OCI-LY7 (cell line): ENCODE measurements at regions of chr1 and their contacts with region 1.

Region 1: GRCh38 chr1:161225534-161226319 is at the start of gene TOMM40L:
- DNase-seq: peak; percentile 99
- H3K4me3 ChIP-seq: peak within 1 kb of the TSS; percentile 73
- H3K27ac ChIP-seq: peak within 1 kb of the TSS; percentile 35
- H3K4me1 ChIP-seq: peaks cover 24% of the 10 kb centered on the region
- CTCF ChIP-seq: peak; percentile 87
- total RNA-seq, gene TOMM40L: 8.3 and 11.0 TPM in 2 replicates

Region 2: DNA sequence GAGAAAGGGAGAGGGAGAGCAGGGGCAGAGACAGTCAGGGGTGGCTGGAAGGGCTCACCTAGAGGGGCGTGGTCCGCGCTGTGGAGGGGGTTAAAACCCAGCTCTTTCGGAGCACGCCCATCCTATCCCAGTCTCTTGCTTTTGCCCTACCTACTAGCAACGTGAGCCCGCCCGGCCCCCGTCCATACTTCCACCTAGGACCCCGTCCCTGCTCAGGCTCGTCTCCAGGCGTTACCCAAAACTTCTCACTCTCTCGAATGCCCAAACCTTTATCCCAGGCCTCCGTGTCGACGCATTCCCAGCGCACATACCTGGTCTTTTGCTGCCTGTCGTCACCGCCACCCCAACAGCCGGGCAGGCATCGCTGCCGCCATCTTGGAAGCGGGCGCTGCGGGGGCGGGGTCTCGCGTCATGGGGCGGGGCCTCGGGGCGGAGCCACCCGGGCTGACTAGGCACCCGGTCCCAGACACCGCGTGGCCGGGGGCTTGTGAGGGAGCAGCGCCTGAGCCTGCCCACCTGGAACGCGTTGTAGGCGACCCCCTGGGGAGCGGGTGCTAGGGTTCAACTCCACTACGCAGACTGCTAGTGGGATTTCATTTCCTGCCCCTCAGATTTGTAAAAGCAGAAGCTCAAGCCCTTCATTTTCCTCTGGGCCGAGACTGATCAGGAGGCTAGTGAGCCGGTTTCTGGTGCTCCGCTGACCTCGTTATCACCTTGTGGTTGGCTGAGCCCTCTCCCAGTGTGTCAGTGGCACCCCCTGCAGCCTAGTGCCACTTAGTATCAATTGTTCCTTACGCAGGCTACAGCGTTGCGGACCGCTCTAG is 48.4 kb before region 1 on chr1 and contains the start of gene B4GALT3:
- CTCF ChIA-PET with region 1: interaction called, 4 read pairs
- POLR2A ChIA-PET with region 1: interaction called, 7 read pairs
- intact Hi-C with region 1: loop called (anchors 1 kb)
- DNase-seq: peak; percentile 87
- H3K4me3 ChIP-seq: peak within 1 kb of the TSS; percentile 86
- H3K27ac ChIP-seq: peak within 1 kb of the TSS; percentile 60
- H3K4me1 ChIP-seq: peaks cover 33% of the 10 kb centered on the region
- CTCF ChIP-seq: peak; percentile 40; the same call in 1 of the 2 replicates
- total RNA-seq, gene B4GALT3: 36.2 and 39.1 TPM in 2 replicates

Region 3: GRCh38 chr1:161201828-161202725 is 23.6 kb before region 1 on chr1 and contains the start of gene NDUFS2:
- CTCF ChIA-PET with region 1: interaction called, 12 read pairs
- POLR2A ChIA-PET with region 1: interaction called, 5 read pairs
- intact Hi-C with region 1: no loop called
- DNase-seq: peak; percentile 99
- H3K4me3 ChIP-seq: peak within 1 kb of the TSS; percentile 75
- H3K27ac ChIP-seq: peak within 1 kb of the TSS; percentile 57
- H3K4me1 ChIP-seq: peaks cover 35% of the 10 kb centered on the region
- CTCF ChIP-seq: peak; percentile 79
- total RNA-seq, gene NDUFS2: 62.9 and 76.4 TPM in 2 replicates

Region 4: GRCh38 chr1:161290779-161291178 is 65.1 kb after region 1 on chr1:
- CTCF ChIA-PET with region 1: interaction called, 4 read pairs
- POLR2A ChIA-PET with region 1: no interaction called
- intact Hi-C with region 1: loop called (anchors 1 kb)
- DNase-seq: no peak
- H3K4me3 ChIP-seq: no peak overlapping the region
- H3K27ac ChIP-seq: no peak overlapping the region
- H3K4me1 ChIP-seq: no peaks in the 10 kb centered on the region
- CTCF ChIP-seq: no peak

Region 5: DNA sequence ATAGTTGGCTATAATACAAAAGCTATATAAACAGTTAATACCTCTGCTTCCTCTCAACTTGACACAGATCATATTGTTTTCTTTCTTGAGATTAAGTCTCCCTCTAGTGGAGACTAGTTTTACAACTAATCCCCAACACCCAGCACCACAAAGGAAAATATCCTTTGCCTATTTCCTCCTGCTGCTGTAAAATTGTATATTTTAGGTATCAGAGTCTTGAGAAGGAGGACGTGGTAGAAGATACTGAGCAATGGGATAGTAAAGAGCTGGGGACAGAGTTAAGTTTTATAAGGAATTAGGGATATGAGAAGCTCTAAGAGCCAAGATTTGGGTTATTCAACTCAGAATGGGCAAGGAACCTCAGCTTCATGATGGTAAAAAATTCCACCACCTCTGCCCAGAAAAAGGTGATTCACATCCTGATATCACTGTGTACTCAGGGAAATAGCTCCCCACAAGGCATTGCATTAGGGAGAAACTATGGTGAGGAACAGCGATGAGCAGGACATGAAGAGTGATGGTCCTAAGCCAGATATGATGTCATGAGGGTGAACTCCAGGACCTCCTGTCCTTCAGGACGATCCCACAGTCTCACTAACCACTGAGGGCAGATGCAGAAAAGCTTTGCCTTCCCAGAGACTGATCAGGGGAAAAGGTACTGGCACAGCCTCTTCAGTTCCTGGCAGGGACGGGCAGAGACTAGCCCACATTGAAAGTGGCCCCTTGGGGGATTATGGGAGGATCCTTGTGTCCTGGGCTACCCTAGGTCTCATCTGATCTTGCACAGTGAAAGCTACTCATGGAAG is 156.7 kb after region 1 on chr1:
- CTCF ChIA-PET with region 1: interaction called, 5 read pairs
- POLR2A ChIA-PET with region 1: interaction called, 7 read pairs
- intact Hi-C with region 1: loop called (anchors 1 kb)
- DNase-seq: peak; percentile 74
- H3K4me3 ChIP-seq: no peak overlapping the region
- H3K27ac ChIP-seq: no peak overlapping the region
- H3K4me1 ChIP-seq: peaks cover 2% of the 10 kb centered on the region
- CTCF ChIP-seq: peak; percentile 87